Esophagus muscularis mucosa (tissue), 4 donors: ENCODE measurements at regions of chr2 and their contacts with region 1.

Region 1: DNA sequence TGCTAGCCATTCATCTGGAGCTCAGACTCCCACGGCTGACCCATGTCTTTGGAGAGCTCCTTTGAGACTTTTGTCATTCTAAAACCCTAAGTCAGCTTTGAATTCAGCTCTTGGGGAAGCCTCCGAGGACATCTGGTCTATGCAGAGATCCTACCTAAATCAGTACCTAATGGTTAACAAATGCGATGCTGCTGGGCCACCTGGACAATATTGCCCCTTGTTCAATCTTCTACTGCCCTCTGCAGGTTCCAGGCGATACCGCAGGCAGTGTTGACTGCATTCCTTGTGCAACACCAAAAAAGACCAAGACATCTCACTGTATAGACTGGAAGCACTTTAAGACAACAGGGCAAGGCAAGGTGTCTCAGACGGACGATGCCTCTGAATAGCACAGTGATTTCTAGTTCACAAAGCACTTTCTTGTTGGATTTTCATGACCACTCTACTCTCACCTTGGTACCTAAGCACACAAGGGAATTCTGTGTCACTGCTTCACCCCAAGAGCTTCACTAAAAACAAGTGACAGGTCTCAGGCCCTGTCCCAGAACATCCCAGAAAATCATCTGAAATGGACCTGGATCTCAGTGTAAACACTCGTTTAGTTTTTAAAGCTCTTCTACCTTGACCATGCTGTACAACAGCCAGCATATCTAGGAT is 80.9 kb downstream of the XDH start:
- DNase-seq: peak; percentile 93
- H3K4me3 ChIP-seq: no peak overlapping the region
- H3K27ac ChIP-seq: no peak overlapping the region
- H3K4me1 ChIP-seq: no peaks in the 10 kb centered on the region
- H3K27me3 ChIP-seq: peaks cover 0 to 4% (median 0%) of the 10 kb centered on the region in 4 donors
- CTCF ChIP-seq: peak; percentile 86 to 93 (median 91)
- EP300 ChIP-seq: no peak
- POLR2A ChIP-seq: no peak

Region 2: GRCh38 chr2:30208452-30208851 is 1125.2 kb before region 1 on chr2:
- intact Hi-C with region 1: loop called (anchors 10 kb)
- DNase-seq: no peak
- H3K4me3 ChIP-seq: no peak overlapping the region
- H3K27ac ChIP-seq: no peak overlapping the region
- H3K4me1 ChIP-seq: peaks cover 4 to 8% (median 7%) of the 10 kb centered on the region in 4 donors
- H3K27me3 ChIP-seq: no peaks in the 10 kb centered on the region
- CTCF ChIP-seq: peak; percentile 91 to 97 (median 93)
- EP300 ChIP-seq: no peak
- POLR2A ChIP-seq: no peak

Region 3: GRCh38 chr2:31170071-31170698 is 163.5 kb before region 1 on chr2:
- intact Hi-C with region 1: loop called (anchors 10 kb)
- DNase-seq: no peak
- H3K4me3 ChIP-seq: no peak overlapping the region
- H3K27ac ChIP-seq: no peak overlapping the region
- H3K4me1 ChIP-seq: no peaks in the 10 kb centered on the region
- H3K27me3 ChIP-seq: peaks cover 0 to 3% (median 0%) of the 10 kb centered on the region in 4 donors
- CTCF ChIP-seq: peak; percentile 79 to 96 (median 86)
- EP300 ChIP-seq: no peak
- POLR2A ChIP-seq: no peak

Region 4: GRCh38 chr2:31233741-31234682 is 99.6 kb before region 1 on chr2 and contains the start of gene EHD3:
- intact Hi-C with region 1: loop called (anchors 1 kb)
- DNase-seq: peak; percentile 94
- H3K4me3 ChIP-seq: peak within 1 kb of the TSS; percentile 66 to 78 (median 72)
- H3K27ac ChIP-seq: peak within 1 kb of the TSS; percentile 44 to 71 (median 54)
- H3K4me1 ChIP-seq: peaks cover 19 to 38% (median 26%) of the 10 kb centered on the region in 4 donors
- H3K27me3 ChIP-seq: no peaks in the 10 kb centered on the region
- CTCF ChIP-seq: peak; percentile 55 to 61 (median 58)
- EP300 ChIP-seq: no peak
- POLR2A ChIP-seq: no peak
- total RNA-seq, gene EHD3: 3.8 to 7.4 (median 4.6) TPM